Heart left ventricle (tissue), 16 donors: ENCODE measurements at regions of chr22 and their contacts with region 1.

Region 1: GRCh38 chr22:29031227-29032011 is 30.2 kb downstream of the C22orf31 start:
- DNase-seq: peak in 4 of 5 donors; percentile 39 to 69 (median 50)
- ATAC-seq: peak; percentile 59 to 85 (median 84)
- H3K4me3 ChIP-seq: peak overlapping the region in 10 of 12 donors; percentile 34 to 60 (median 56)
- H3K27ac ChIP-seq: peak overlapping the region; percentile 8 to 85 (median 74)
- H3K4me1 ChIP-seq: peaks cover 0 to 30% (median 15%) of the 10 kb centered on the region in 12 donors
- H3K27me3 ChIP-seq: peaks cover 0 to 8% (median 0%) of the 10 kb centered on the region in 9 donors
- CTCF ChIP-seq: peak in 2 of 12 donors; percentile 7 to 9
- POLR2A ChIP-seq: no peak

Region 2: DNA sequence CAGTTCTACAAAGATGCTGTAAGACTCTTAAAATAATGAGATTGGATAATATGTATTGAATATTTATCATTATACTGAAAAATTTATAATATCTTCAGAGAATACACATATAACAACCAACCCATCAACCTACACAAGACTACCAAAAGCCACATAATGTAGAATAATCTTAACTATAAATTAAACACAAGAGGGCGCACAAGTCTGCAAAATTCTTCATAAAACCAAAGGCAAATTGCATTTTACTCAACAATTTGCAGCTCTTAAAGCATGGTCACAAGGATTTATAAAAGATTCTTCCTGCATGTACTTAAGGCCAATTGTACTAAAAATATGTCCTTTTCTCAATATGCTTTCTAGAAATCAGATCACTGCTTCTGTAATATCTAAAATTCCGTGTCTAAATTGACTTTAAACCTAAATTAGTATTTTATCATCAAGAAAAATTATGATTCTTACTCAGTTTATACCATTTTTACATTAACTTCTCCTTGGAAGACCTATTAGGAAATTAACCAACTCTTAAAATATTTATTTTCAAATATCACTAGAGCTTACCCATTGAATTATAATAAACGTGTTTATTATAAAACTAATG is 430.8 kb before region 1 on chr22:
- intact Hi-C with region 1: loop called in 2 of 10 experiments (anchors 5 to 10 kb)
- DNase-seq: no peak
- ATAC-seq: peak in 1 of 4 donors; percentile 39
- H3K4me3 ChIP-seq: no peak overlapping the region
- H3K27ac ChIP-seq: no peak overlapping the region
- H3K4me1 ChIP-seq: no peaks in the 10 kb centered on the region
- H3K27me3 ChIP-seq: no peaks in the 10 kb centered on the region
- CTCF ChIP-seq: peak; percentile 26 to 77 (median 54)
- POLR2A ChIP-seq: no peak

Region 3: GRCh38 chr22:28882878-28883656 is 148.4 kb before region 1 on chr22 and contains the start of gene ZNRF3:
- intact Hi-C with region 1: loop called in 3 of 10 experiments (anchors 10 kb)
- DNase-seq: peak; percentile 92 to 97 (median 94)
- ATAC-seq: peak; percentile 96 to 98 (median 97)
- H3K4me3 ChIP-seq: peak within 1 kb of the TSS; percentile 32 to 88 (median 66)
- H3K27ac ChIP-seq: peak within 1 kb of the TSS in 10 of 12 donors; percentile 32 to 74 (median 68)
- H3K4me1 ChIP-seq: peaks cover 5 to 23% (median 17%) of the 10 kb centered on the region in 12 donors
- H3K27me3 ChIP-seq: peaks cover 0 to 9% (median 0%) of the 10 kb centered on the region in 9 donors
- CTCF ChIP-seq: no peak
- POLR2A ChIP-seq: peak in 1 of 2 donors; percentile 7
- total RNA-seq, gene ZNRF3: 5.3 to 9.2 (median 7.3) TPM

Region 4: GRCh38 chr22:28917747-28918549 is 113.5 kb before region 1 on chr22:
- intact Hi-C with region 1: loop called in 3 of 10 experiments (anchors 1 to 2 kb)
- DNase-seq: peak; percentile 22 to 61 (median 49)
- ATAC-seq: peak; percentile 80 to 91 (median 89)
- H3K4me3 ChIP-seq: no peak overlapping the region
- H3K27ac ChIP-seq: peak overlapping the region; percentile 55 to 96 (median 83)
- H3K4me1 ChIP-seq: peaks cover 0 to 40% (median 16%) of the 10 kb centered on the region in 12 donors
- H3K27me3 ChIP-seq: no peaks in the 10 kb centered on the region
- CTCF ChIP-seq: no peak
- POLR2A ChIP-seq: no peak

Region 5: DNA sequence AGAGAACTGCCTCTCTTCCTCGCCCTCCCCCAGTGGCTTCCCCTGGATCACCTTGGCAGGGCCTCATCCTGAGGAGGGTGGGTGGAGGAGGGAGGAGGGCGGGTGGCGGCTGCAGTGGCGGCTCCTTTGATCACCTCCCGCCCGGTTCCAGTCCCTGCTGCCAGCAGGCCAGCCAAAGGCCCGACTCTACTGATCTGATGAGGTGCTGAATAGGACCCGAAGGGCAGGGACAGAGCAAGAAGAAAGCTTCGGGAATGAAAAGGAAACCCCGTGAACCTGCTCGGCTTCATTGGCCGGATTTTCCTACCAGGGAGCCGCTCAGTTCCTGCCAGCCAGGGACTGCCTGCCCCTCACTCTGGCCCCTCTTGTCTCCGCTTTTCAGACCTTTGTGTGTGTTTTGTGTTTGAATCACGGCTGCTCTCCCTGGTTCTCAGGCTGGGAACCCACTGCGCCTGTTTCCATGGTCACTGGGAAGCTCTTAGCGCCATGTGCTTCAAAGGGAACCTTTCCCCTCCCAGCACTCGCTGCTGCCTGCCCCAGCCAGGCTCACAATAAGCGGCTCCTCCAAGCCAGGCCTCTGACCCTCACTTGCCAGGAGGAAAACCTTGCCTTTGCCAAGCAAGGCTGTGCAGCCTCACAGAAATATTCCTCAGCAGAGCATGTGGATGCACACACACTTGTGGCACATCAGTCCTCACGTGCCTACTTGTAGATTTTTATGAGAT is 26.6 kb before region 1 on chr22:
- intact Hi-C with region 1: loop called in 1 of 10 experiments (anchors 1 kb)
- DNase-seq: peak in 4 of 5 donors; percentile 25 to 51 (median 42)
- ATAC-seq: peak; percentile 44 to 86 (median 80)
- H3K4me3 ChIP-seq: peak overlapping the region in 2 of 12 donors; percentile 23 to 27
- H3K27ac ChIP-seq: peak overlapping the region in 7 of 12 donors; percentile 21 to 60 (median 41)
- H3K4me1 ChIP-seq: peaks cover 0 to 37% (median 15%) of the 10 kb centered on the region in 12 donors
- H3K27me3 ChIP-seq: no peaks in the 10 kb centered on the region
- CTCF ChIP-seq: no peak
- POLR2A ChIP-seq: no peak

Region 6: GRCh38 chr22:29093501-29094300 is 62.3 kb after region 1 on chr22:
- intact Hi-C with region 1: no loop called
- DNase-seq: peak in 1 of 5 donors; percentile 59
- ATAC-seq: peak; percentile 59 to 80 (median 72)
- H3K4me3 ChIP-seq: no peak overlapping the region
- H3K27ac ChIP-seq: peak overlapping the region in 10 of 12 donors; percentile 7 to 67 (median 48)
- H3K4me1 ChIP-seq: peaks cover 0 to 60% (median 22%) of the 10 kb centered on the region in 12 donors
- H3K27me3 ChIP-seq: no peaks in the 10 kb centered on the region
- CTCF ChIP-seq: no peak
- POLR2A ChIP-seq: no peak

Region 7: DNA sequence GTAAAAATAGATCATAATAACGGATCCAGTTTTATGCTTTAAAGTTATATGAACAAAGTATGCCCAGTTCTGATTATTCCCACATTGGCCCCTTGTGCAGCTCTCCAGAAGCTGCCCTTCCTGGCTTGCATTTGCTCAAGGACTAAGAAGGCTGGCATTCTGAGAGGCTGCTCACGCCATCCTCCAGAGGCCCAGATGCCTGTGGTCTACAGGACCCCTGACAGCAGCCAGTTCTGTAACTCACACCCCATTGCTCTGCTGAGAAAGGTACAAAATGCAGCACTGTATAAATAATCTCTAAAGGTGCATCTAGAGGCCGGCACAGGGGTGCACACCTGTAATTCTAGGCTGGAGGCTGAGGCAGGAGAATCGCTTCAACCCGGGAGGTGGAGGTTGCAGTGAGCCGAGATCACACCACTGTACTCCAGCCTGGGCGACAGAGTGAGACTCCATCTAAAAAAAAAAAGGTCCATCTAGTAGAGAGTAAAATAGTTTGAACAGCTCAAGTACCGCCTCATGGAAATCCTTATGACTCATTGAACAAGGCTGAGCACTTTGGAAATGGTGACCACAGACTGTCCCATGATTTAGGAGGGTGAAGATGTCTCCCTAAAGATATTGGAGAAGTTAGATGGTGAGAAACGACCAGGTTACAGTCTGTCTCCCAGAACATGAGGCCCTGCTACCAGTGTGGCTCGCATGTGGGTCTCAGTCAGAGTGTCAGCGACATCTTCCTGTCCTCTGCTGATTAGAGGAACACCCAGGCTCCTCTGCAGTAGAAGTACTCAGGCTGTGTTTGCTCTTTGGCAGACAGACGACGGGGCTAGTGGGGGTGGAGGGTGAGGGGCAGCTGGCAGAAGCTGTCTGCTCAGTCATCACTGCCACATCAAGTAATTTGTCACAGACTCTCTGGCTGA is 97.7 kb after region 1 on chr22:
- intact Hi-C with region 1: no loop called
- DNase-seq: peak in 3 of 5 donors; percentile 43 to 53 (median 50)
- ATAC-seq: peak; percentile 82 to 97 (median 91)
- H3K4me3 ChIP-seq: no peak overlapping the region
- H3K27ac ChIP-seq: peak overlapping the region in 10 of 12 donors; percentile 3 to 71 (median 54)
- H3K4me1 ChIP-seq: peaks cover 0 to 16% (median 8%) of the 10 kb centered on the region in 12 donors
- H3K27me3 ChIP-seq: no peaks in the 10 kb centered on the region
- CTCF ChIP-seq: no peak
- POLR2A ChIP-seq: no peak